Head of caudate nucleus (tissue), 42 donors: ENCODE measurements at regions of chr16 and their contacts with region 1.

Region 1: GRCh38 chr16:52912565-52913173 is 140.0 kb downstream of the CHD9NB start:
- DNase-seq: peak; percentile 42 to 89 (median 79)

Region 2: DNA sequence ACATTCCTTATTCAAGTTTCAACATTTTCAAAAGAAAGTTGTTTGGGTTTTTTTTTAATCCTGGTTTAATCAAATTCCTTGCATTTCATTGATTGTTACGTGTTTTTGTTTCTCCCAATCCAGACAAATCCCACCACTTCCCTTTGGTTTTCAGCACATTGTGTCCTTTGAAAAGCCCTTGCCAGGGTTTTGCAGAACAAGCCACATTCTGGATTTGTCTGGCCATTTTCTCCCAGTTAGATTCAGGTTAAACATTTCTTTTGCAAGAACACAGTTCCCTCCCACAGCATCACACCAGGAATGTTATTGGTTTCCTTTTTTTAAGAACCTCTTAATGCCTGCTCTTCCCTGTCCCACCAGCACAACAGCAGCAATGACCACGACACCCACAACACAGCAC is 1483.6 kb before region 1 on chr16:
- intact Hi-C with region 1: no loop called
- DNase-seq: no peak

Region 3: GRCh38 chr16:52068447-52069074 is 844.1 kb before region 1 on chr16:
- intact Hi-C with region 1: loop called (anchors 5 kb)
- DNase-seq: peak in 41 of 42 donors; percentile 6 to 80 (median 54)

Region 4: GRCh38 chr16:52191531-52192134 is 721.0 kb before region 1 on chr16:
- intact Hi-C with region 1: loop called (anchors 10 kb)
- DNase-seq: peak in 41 of 42 donors; percentile 41 to 90 (median 76)

Region 5: DNA sequence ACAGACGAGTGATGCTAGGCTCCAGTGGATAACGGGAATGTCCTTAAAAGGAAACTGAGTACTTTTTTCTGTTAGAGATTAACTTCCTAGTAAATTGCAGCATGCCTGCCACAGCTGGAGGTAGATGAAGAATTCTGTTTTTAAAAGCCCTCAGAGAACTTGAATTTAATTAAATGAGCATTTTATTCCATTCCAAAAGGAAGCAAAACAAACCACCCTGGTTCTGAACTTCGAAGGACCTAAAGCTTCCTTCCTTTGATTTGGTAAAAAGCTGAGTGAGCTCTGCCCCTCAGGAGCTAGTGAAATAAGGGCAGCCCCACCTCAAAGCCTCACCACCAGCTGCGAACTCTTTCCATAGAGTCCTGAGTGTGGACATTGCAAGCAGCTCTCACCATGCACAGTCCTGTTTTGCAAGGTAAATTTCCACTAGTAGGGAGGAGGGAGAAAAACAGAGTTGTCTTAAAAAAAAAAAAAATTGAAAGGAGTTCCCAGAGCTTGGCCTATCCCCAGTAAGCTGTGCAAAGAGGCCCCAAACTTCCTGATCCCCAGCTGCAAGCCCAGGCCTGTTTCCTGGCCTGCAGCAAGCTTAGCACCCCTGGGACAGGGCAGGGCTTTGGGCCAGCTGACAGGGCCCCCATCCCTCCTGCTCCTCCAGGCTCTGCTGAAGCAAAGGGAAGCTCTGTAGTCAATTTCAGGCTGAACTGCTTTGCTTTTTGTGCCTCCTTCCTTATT is 128.8 kb after region 1 on chr16:
- intact Hi-C with region 1: no loop called
- DNase-seq: peak in 2 of 42 donors; percentile 6 to 23